Naive thymus-derived CD4-positive, alpha-beta T cell (primary cell): ENCODE measurements at regions of chr2 and their contacts with region 1.

Region 1: DNA sequence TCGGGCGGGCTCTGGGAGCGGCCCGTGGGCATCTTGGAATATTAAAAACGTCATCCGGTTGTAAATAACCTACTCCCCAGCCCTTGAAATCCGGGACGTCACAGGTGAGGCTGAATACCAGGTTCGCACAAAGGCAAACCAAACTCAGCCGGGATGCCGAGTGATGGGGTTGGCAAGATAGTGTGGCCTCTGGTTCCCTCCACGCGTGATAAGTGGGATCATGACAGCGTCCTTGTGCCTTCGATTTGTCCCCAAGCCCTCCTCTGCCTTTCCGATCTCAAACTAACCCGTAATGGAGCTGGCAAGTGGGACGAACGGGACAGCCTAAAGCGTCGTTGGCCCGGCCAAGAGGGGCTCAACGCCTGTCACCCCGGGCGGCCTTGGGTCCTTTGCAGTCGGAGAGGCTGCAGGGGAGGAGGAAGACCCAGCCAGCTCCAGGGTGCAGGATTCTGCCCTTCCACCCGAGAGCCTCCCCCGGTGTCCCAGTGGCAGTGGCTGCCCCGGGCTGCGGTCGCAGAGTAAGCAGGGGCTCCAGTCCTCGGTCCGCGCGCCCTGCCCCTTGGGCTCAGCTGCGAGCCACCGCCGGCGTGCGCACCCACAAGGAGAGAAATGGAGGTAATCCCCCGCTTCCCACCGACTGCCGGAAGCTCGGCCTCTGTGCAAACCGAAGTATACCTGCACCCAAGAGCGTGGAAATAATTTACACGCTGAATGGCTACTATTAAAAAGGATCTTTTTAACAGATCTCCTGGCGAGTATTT is 13.4 kb upstream of the PAX3 start:
- DNase-seq: no peak
- ATAC-seq: no peak
- H3K4me3 ChIP-seq: no peak overlapping the region
- H3K4me3 Mint-ChIP-seq: peak overlapping the region in 1 of 10 donors; percentile 29
- H3K27ac ChIP-seq: no peak overlapping the region
- H3K27ac Mint-ChIP-seq: peak overlapping the region in 1 of 9 donors; percentile 66
- H3K4me1 ChIP-seq: no peaks in the 10 kb centered on the region
- H3K4me1 Mint-ChIP-seq: peaks cover 4 to 14% (median 6%) of the 10 kb centered on the region in 7 donors
- H3K27me3 ChIP-seq: peaks cover 5 to 32% of the 10 kb centered on the region in 2 donors
- H3K27me3 Mint-ChIP-seq: peaks cover 92 to 99% (median 96%) of the 10 kb centered on the region in 5 donors

Region 2: GRCh38 chr2:221850059-221850458 is 462.1 kb before region 1 on chr2:
- CTCF ChIA-PET with region 1: no interaction called
- POLR2A ChIA-PET with region 1: no interaction called
- intact Hi-C with region 1: no loop called
- DNase-seq: no peak
- ATAC-seq: no peak
- H3K4me3 ChIP-seq: no peak overlapping the region
- H3K4me3 Mint-ChIP-seq: no peak overlapping the region
- H3K27ac ChIP-seq: no peak overlapping the region
- H3K27ac Mint-ChIP-seq: no peak overlapping the region
- H3K4me1 ChIP-seq: no peaks in the 10 kb centered on the region
- H3K4me1 Mint-ChIP-seq: no peaks in the 10 kb centered on the region
- H3K27me3 ChIP-seq: no peaks in the 10 kb centered on the region
- H3K27me3 Mint-ChIP-seq: no peaks in the 10 kb centered on the region

Region 3: DNA sequence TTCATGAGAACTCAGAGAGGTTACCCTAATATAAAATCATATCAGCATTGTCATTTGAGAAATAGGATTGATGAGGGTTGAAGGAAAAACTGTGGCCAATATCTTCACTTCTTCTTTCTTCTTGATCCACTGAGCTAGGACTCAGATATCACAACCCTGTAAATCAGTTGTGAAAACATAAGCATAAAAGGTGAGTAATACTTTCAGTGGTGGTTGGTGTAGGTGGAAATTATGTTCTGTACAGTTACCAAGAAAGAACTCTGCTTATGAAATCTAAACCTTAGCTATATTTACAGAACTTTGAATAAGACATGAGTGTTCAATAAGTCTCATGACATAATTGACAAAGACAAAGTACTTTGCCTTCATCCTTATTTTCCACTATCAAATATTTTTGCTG is 69.6 kb before region 1 on chr2:
- CTCF ChIA-PET with region 1: no interaction called
- POLR2A ChIA-PET with region 1: no interaction called
- intact Hi-C with region 1: loop called in 1 of 2 experiments (anchors 2 kb)
- DNase-seq: no peak
- ATAC-seq: no peak
- H3K4me3 ChIP-seq: no peak overlapping the region
- H3K4me3 Mint-ChIP-seq: no peak overlapping the region
- H3K27ac ChIP-seq: no peak overlapping the region
- H3K27ac Mint-ChIP-seq: no peak overlapping the region
- H3K4me1 ChIP-seq: no peaks in the 10 kb centered on the region
- H3K4me1 Mint-ChIP-seq: no peaks in the 10 kb centered on the region
- H3K27me3 ChIP-seq: no peaks in the 10 kb centered on the region
- H3K27me3 Mint-ChIP-seq: peaks cover 34 to 53% (median 49%) of the 10 kb centered on the region in 5 donors

Region 4: DNA sequence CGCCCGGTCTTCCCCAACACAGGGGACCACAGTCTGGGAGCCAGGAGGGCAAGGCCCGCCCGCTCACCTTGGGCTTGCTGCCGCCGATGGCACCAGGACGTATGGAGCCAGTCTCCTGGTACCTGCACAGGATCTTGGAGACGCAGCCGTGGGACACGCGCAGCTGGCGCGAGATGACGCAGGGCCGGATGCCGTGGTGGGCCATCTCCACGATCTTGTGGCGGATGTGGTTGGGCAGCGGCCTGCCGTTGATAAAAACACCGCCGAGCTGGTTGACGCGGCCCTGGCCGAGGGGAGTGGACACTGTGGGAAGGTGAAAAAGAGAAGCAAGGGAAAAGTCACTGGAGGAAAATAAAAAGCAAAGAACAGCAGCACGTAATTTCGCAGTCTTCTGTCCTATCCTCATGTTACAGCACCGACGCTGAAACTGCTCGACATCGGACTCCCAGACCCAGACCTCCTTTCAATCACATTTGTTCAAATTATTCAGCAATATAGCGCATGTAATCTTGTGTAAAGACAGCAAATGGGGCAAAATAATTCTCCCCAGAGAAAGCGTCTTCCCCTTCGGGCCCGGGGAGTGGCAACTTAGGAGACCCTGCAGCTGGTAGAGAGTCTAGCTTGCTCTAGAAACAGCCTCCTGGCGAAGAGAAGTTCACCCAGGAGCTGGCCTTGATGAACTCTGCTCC is 15.1 kb before region 1 on chr2:
- CTCF ChIA-PET with region 1: no interaction called
- POLR2A ChIA-PET with region 1: no interaction called
- intact Hi-C with region 1: loop called in 1 of 2 experiments (anchors 1 kb)
- DNase-seq: no peak
- ATAC-seq: no peak
- H3K4me3 ChIP-seq: no peak overlapping the region
- H3K4me3 Mint-ChIP-seq: peak overlapping the region in 4 of 10 donors; percentile 34 to 72 (median 60)
- H3K27ac ChIP-seq: no peak overlapping the region
- H3K27ac Mint-ChIP-seq: peak overlapping the region in 1 of 9 donors; percentile 38
- H3K4me1 ChIP-seq: peaks cover 0 to 5% of the 10 kb centered on the region in 2 donors
- H3K4me1 Mint-ChIP-seq: peaks cover 21 to 37% (median 30%) of the 10 kb centered on the region in 7 donors
- H3K27me3 ChIP-seq: peaks cover 0 to 28% of the 10 kb centered on the region in 2 donors
- H3K27me3 Mint-ChIP-seq: peaks cover 85 to 99% (median 92%) of the 10 kb centered on the region in 5 donors